Left ventricle myocardium superior (tissue), 1 donor: ENCODE measurements at regions of chr11 and their contacts with region 1.

Region 1: GRCh38 chr11:95147364-95147905 is 57.8 kb downstream of the ENDOD1 start:
- DNase-seq: no peak
- ATAC-seq: no peak

Region 2: DNA sequence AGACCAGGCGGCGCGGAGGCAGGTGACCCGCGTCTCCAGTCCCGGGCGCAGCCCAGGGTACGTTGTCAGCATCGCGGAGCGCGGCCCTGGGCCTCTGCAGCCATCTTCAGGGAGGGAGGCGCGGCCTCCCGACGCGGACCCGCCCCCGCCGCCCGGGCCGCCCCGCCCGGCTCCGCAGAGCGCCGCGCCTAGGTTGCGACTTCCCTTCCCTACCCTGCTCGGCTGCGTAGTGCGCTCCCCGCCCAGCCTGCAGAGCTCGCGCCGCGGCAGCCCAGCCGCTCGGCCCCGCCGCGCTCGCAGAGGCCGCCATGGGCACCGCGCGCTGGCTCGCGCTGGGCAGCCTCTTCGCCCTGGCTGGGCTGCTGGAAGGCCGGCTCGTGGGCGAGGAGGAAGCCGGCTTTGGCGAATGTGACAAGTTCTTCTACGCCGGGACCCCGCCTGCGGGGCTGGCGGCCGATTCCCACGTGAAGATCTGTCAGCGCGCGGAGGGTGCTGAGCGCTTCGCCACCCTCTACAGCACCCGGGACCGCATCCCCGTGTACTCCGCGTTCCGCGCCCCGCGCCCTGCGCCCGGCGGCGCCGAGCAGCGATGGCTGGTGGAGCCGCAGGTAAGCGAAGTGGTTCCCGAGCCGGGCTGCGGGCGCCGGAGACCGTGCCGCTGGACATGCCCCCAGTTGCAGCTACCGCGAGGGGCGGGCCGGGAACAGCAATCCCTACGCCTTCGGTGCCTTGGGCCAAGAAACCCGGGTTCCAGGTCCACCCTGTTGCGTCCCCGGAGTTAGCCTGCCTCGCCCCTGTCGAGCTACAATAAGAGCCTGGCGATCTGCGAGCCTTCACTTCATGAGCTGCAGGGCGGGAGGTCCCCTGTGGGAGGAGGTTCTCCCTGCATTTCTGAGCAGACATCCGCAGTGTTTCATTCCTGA is 57.6 kb before region 1 on chr11 and contains the start of gene ENDOD1:
- intact Hi-C with region 1: loop called (anchors 10 kb)
- DNase-seq: peak; percentile 92
- ATAC-seq: peak; percentile 99
- total RNA-seq, gene ENDOD1: 10.7 TPM

Region 3: GRCh38 chr11:95121698-95122097 is 25.7 kb before region 1 on chr11:
- intact Hi-C with region 1: no loop called
- DNase-seq: no peak
- ATAC-seq: no peak

Region 4: DNA sequence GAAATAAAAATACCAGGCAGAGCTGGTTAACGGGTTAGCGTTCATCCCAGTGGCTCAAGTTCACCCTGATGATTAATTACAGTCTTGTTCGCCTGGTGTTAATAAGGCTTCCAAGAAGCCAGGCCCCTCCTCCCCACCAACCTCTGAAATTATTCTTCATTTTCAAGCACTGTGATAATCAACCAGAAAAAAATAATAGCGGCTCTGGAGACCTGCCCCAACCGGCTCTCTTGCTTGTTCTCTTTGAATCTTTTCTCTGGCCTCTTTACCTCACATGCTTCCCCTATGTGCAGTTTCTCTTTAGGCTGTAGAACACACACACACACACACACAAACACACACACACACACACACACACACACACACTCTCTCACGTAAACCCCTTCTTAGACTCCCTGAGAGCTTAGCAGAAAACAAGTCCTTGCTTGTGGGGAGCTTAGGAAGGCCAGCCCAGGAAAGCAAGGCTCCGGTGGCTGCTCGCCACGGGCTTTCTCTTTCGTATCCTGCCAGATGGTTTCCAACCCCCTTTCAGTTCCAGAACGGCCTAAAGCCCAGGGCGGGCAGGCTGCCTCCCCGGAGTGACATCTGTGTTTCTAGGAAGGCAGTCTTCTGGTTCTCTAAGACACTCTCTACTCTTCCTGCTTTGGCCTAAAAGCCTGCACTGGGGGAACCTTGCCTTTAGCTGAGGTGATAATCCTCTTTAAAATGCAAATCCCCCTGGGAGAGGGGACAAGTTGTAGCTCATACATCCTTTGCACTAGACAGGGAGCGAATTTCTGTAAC is 189.9 kb after region 1 on chr11:
- intact Hi-C with region 1: no loop called
- DNase-seq: peak; percentile 83
- ATAC-seq: peak; percentile 82